ENCODE measurements at regions of chrX and their contacts with region 1.

Region 1: DNA sequence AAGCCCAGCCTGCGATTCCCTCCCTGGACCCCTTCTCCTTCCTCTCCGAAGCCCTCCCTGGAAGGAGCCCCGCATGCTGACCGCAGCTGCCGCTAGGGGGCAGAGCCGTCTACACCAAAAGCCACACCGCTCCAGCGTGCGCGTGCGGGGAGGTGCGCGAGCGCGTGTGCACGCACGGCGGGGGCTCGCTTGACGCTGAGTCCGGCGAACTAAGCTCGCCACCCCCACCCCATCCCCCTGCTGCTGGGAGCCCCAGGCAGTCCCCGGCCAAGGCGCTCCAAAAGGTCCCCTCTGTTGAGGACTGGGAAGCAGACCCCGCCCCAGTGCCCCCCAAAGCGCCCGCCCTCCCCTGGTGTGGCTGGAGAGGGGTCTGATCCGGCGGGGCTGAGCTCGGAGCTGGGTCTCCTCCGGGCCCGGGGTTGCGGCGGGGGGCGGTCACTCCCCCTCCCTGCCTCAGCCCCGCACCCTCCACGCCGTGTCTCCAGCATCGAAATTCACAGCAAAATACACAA is 11.0 kb upstream of the CCNQ start:
- DNase-seq: peak; percentile 63
- ATAC-seq: peak; percentile 92
- H3K4me3 Mint-ChIP-seq: peak overlapping the region; percentile 82
- H3K27ac Mint-ChIP-seq: no peak overlapping the region
- H3K4me1 Mint-ChIP-seq: peaks cover 9% of the 10 kb centered on the region
- H3K27me3 Mint-ChIP-seq: peaks cover 3% of the 10 kb centered on the region
- CTCF ChIP-seq: no peak

Region 2: DNA sequence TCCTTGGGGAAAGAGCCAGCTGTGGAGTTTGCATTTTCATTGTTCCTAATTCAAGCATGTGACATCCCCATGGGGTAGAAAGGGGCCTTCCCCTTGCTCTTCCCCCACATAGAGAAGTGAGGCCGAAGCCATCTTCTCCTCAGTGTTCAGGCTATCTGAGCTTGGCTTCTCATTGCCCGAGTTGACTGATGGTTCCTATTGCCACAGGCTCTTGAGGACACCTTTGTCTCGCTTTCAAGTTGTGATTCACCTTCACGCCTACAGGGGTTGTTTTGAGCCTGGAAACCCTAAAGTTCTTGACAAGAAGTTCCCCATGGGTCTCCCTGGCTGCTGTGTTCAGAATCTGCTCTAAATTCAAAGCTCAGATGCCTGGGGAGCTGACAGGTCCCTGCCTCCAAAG is 36.0 kb before region 1 on chrX:
- CTCF ChIA-PET with region 1: interaction called, 3 read pairs
- POLR2A ChIA-PET with region 1: no interaction called
- intact Hi-C with region 1: loop called (anchors 5 kb)
- DNase-seq: no peak
- ATAC-seq: peak; percentile 71
- H3K4me3 Mint-ChIP-seq: no peak overlapping the region
- H3K27ac Mint-ChIP-seq: no peak overlapping the region
- H3K4me1 Mint-ChIP-seq: peaks cover 8% of the 10 kb centered on the region
- H3K27me3 Mint-ChIP-seq: no peaks in the 10 kb centered on the region
- CTCF ChIP-seq: no peak

Region 3: DNA sequence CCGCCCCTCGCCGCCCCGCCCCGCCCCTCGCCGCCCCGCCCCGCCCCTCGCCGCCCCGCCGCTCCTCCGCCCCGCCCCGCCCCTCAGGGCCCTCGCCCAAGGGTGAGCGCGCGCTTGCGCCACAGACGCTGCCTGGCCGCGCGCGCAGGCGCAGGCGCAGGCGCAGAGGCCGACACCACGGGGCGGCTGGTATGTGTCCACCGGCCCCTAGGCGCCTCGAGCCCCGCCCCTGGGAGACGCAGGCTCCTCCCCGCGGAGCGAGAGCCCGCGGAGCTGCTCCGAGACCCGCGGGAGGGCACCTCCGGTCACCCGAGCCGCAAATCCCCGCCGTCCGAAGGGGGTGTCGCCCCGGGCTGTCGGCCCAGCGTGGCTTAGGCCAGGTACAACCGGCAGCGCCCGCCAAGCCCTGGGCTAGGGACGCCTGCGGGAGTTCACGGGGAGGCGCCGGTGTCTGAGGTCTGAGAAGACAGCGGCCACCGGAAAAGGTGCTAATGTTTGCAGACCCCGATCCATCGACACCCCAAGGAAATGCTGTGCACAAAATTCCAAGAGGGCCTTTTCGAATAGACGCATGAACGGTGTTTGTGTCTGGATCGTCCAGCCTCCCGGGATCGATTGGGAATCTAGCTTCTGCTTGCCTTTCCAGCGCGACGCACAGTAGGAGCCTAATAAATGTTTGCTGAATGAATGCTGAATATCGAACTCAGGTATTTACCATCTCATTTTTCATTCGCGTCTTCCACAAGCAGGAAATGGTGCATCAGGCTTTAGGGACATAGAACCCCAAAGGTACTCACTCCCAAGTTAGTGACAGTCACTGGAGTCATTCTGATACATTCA is 10.6 kb before region 1 on chrX:
- CTCF ChIA-PET with region 1: interaction called, 9 read pairs
- POLR2A ChIA-PET with region 1: interaction called, 12 read pairs
- intact Hi-C with region 1: loop called (anchors 1 kb)
- DNase-seq: peak; percentile 82
- ATAC-seq: peak; percentile 84
- H3K4me3 Mint-ChIP-seq: peak overlapping the region; percentile 77
- H3K27ac Mint-ChIP-seq: no peak overlapping the region
- H3K4me1 Mint-ChIP-seq: peaks cover 36% of the 10 kb centered on the region
- H3K27me3 Mint-ChIP-seq: no peaks in the 10 kb centered on the region
- CTCF ChIP-seq: no peak

Region 4: GRCh38 chrX:153643431-153644351 is 33.7 kb after region 1 on chrX:
- CTCF ChIA-PET with region 1: interaction called, 4 read pairs
- POLR2A ChIA-PET with region 1: interaction called, 3 read pairs
- intact Hi-C with region 1: loop called (anchors 1 kb)
- DNase-seq: no peak
- ATAC-seq: peak; percentile 42
- H3K4me3 Mint-ChIP-seq: no peak overlapping the region
- H3K27ac Mint-ChIP-seq: no peak overlapping the region
- H3K4me1 Mint-ChIP-seq: peaks cover 15% of the 10 kb centered on the region
- H3K27me3 Mint-ChIP-seq: peaks cover 15% of the 10 kb centered on the region
- CTCF ChIP-seq: no peak

Region 5: GRCh38 chrX:153662266-153662665 is 52.3 kb after region 1 on chrX:
- CTCF ChIA-PET with region 1: no interaction called
- POLR2A ChIA-PET with region 1: interaction called, 5 read pairs
- intact Hi-C with region 1: loop called (anchors 1 kb)
- DNase-seq: peak; percentile 44
- ATAC-seq: no peak
- H3K4me3 Mint-ChIP-seq: peak overlapping the region; percentile 55
- H3K27ac Mint-ChIP-seq: no peak overlapping the region
- H3K4me1 Mint-ChIP-seq: peaks cover 2% of the 10 kb centered on the region
- H3K27me3 Mint-ChIP-seq: peaks cover 11% of the 10 kb centered on the region
- CTCF ChIP-seq: no peak

Measured in activated B cell treated with CpG ODN at 0.5 μM for 24 hours (primary cell).